Mucosa of descending colon (tissue), 3 donors: ENCODE measurements at regions of chr12 and their contacts with region 1.

Region 1: DNA sequence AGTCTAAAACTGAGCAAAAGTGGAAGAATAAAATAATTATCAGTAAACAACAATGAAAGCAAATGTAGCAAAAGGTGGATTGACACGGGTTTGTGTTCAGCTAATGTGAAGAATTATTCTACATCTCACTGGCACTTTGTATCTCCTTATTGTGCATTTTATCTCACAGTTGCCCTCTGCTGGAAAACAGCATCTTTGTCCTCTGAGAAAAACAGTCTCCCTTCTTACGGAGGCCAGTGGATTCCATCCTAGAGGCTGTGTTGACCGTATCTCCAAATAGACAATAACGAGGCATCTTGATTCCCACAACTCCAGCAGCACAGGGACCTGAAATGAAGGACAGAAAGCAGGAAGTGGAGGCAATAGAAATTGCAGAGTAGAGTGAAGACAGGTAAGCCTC is 51.3 kb upstream of the PLBD1 start:
- DNase-seq: peak in 1 of 3 donors; percentile 43
- ATAC-seq: peak; percentile 18
- H3K4me3 ChIP-seq: no peak overlapping the region
- H3K4me1 ChIP-seq: peaks cover 10% of the 10 kb centered on the region
- CTCF ChIP-seq: no peak

Region 2: DNA sequence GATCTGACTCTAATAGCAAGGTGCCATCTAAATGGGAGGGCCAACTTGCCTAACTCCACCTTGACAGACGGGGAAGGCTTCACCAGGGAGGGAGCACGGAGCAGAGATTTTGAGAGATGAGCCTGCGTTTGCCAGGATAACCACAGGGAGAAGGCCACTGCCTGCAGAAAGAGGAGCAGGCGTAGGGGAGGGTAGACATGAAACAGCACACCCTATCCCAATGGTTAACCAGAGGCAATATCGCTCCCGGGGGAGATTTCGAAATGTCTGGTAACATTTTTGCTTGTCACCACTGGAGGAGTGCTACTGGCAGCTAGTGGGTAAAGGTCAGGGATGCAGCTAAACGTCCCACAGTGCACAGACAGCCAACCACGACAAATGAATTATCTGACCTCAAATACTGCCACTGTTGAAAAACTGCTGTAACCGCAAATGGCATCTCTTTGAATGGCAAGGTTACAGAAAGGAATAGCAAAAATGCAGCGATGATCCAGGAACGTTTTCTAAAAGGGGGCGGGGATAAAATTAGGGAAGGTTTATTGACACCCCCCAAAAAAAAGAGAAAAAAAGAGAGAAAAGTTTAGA is 379.5 kb before region 1 on chr12:
- intact Hi-C with region 1: loop called in 1 of 2 experiments (anchors 10 kb)
- DNase-seq: peak in 1 of 3 donors; percentile 23
- ATAC-seq: peak; percentile 54
- H3K4me3 ChIP-seq: no peak overlapping the region
- H3K4me1 ChIP-seq: peaks cover 2% of the 10 kb centered on the region
- CTCF ChIP-seq: no peak

Region 3: GRCh38 chr12:14514154-14514842 is 104.7 kb before region 1 on chr12:
- intact Hi-C with region 1: loop called in 1 of 2 experiments (anchors 10 kb)
- DNase-seq: peak in 1 of 3 donors; percentile 84
- ATAC-seq: peak; percentile 98
- H3K4me3 ChIP-seq: no peak overlapping the region
- H3K4me1 ChIP-seq: peaks cover 4% of the 10 kb centered on the region
- CTCF ChIP-seq: peak; percentile 28